Breast epithelium (tissue), 4 donors: ENCODE measurements at regions of chrX and their contacts with region 1.

Region 1: DNA sequence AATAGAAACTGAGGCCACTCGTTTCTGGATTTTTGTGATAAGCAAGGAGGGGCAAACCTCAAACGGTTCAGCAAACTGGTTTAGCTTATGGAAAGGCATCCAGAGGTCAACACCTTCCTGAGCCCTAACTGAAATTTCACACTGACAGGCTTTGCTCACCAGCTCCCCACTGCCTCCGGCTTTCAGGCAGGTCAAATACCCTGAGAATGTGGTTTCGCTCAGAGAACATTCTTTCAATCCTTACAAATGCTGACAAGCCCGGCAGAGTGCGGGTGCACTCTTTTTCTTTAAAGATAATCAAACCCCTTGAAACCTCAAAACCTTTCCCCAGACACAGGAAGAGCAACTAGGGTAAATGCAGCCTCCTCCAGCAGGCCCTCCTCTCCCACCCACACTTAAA is 41.5 kb downstream of the CD40LG start:
- DNase-seq: no peak
- H3K4me3 ChIP-seq: no peak overlapping the region
- H3K27ac ChIP-seq: no peak overlapping the region
- H3K4me1 ChIP-seq: no peaks in the 10 kb centered on the region
- H3K27me3 ChIP-seq: peaks cover 0 to 33% of the 10 kb centered on the region in 2 donors
- CTCF ChIP-seq: no peak
- POLR2A ChIP-seq: no peak

Region 2: GRCh38 chrX:136275553-136275952 is 413.9 kb before region 1 on chrX:
- intact Hi-C with region 1: loop called (anchors 5 kb)
- DNase-seq: no peak
- H3K4me3 ChIP-seq: no peak overlapping the region
- H3K27ac ChIP-seq: no peak overlapping the region
- H3K4me1 ChIP-seq: no peaks in the 10 kb centered on the region
- H3K27me3 ChIP-seq: peaks cover 0 to 42% of the 10 kb centered on the region in 2 donors
- CTCF ChIP-seq: no peak
- POLR2A ChIP-seq: no peak

Region 3: DNA sequence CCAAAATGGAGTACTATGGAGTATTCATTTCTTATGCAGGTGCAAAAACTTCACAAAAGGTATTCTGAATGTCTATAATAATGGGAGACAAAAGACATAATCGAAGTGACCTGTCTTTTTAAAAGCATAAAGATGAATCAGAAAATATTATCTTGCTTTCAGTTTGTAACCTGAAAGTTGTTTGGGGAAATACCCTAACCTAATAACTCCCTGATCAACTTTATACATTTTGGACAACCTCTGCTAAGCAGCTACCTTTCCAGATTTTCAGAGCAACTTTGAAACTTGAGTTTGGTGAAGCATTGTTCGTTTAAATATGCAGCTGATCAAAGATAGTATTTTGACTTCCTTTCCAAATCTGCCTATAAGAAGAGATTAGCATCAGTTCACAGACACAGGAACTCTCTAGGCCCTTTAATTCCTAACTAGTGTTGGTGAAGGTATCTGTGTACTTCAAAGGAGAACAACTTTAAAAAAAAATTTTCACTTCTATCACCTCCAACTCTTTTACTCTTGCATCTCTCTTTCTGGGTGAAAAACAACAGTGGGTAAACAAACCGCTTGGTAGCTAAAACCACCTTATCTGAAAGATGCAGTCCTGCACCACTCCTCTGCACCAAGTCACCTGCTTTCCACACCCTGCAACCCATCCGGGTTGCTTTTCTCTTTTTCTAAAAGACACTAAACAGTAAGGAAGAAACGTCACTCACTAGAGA is 15.0 kb before region 1 on chrX:
- intact Hi-C with region 1: no loop called
- DNase-seq: no peak
- H3K4me3 ChIP-seq: no peak overlapping the region
- H3K27ac ChIP-seq: no peak overlapping the region
- H3K4me1 ChIP-seq: no peaks in the 10 kb centered on the region
- H3K27me3 ChIP-seq: peaks cover 0 to 23% of the 10 kb centered on the region in 2 donors
- CTCF ChIP-seq: no peak
- POLR2A ChIP-seq: no peak